HepG2 (cell line): ENCODE measurements at regions of chr2 and their contacts with region 1.

Region 1: DNA sequence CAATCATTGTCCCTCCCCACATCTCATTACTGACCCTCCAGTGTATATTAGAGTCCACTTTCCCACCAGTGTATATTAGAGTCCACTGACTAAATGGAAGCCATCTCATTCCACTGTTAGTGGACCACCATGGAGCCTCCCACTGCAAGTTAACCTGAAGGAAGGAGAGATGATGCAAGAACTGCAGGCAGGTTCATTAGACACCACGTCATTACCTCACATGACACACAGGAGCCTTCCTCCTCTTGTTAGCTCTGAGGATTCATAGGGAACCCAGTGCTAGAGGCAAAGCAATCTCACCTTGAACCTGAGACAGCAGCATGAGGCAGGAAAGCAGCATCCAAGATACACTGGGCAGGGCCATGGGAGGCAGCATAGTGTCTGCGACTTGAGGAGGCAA is 523 bp downstream of the REG3A start:
- DNase-seq: no peak
- ATAC-seq: no peak
- H3K4me3 ChIP-seq: no peak overlapping the region
- H3K27ac ChIP-seq: no peak overlapping the region
- H3K4me1 ChIP-seq: no peaks in the 10 kb centered on the region
- H3K27me3 ChIP-seq: no peaks in the 10 kb centered on the region
- CTCF ChIP-seq: no peak
- EP300 ChIP-seq: no peak
- POLR2A ChIP-seq: no peak
- RAD21 ChIP-seq: no peak

Region 2: GRCh38 chr2:78979380-78980151 is 179.5 kb before region 1 on chr2:
- CTCF ChIA-PET with region 1: no interaction called
- POLR2A ChIA-PET with region 1: no interaction called
- in situ Hi-C with region 1: no loop called
- intact Hi-C with region 1: no loop called
- DNase-seq: peak; percentile 53
- ATAC-seq: peak; percentile 95
- H3K4me3 ChIP-seq: no peak overlapping the region
- H3K27ac ChIP-seq: no peak overlapping the region
- H3K4me1 ChIP-seq: no peaks in the 10 kb centered on the region
- H3K27me3 ChIP-seq: no peaks in the 10 kb centered on the region
- CTCF ChIP-seq: peak; percentile 89
- EP300 ChIP-seq: no peak
- POLR2A ChIP-seq: no peak
- RAD21 ChIP-seq: peak; percentile 83

Region 3: DNA sequence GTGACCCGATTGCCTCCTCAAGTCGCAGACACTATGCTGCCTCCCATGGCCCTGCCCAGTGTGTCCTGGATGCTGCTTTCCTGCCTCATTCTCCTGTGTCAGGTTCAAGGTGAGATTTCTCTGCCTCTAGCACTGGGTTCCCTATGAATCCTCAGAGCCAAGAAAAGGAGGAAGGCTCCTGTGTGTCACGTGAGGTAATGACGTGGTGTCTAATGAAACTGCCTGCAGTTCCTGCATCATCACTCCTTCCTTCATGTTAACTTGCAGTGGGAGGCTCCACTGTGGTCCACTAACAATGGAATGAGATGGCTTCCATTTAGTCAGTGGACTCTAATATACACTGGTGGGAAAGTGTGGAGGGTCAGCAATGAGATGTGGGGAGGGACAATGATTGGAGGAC is 133.0 kb before region 1 on chr2:
- CTCF ChIA-PET with region 1: no interaction called
- POLR2A ChIA-PET with region 1: no interaction called
- in situ Hi-C with region 1: no loop called
- intact Hi-C with region 1: loop called (anchors 2 kb)
- DNase-seq: no peak
- ATAC-seq: no peak
- H3K4me3 ChIP-seq: no peak overlapping the region
- H3K27ac ChIP-seq: no peak overlapping the region
- H3K4me1 ChIP-seq: no peaks in the 10 kb centered on the region
- H3K27me3 ChIP-seq: no peaks in the 10 kb centered on the region
- CTCF ChIP-seq: no peak
- EP300 ChIP-seq: no peak
- POLR2A ChIP-seq: no peak
- RAD21 ChIP-seq: no peak

Region 4: GRCh38 chr2:79219383-79219988 is 60.5 kb after region 1 on chr2:
- CTCF ChIA-PET with region 1: no interaction called
- POLR2A ChIA-PET with region 1: no interaction called
- in situ Hi-C with region 1: no loop called
- intact Hi-C with region 1: no loop called
- DNase-seq: peak; percentile 55
- ATAC-seq: peak; percentile 79
- H3K4me3 ChIP-seq: no peak overlapping the region
- H3K27ac ChIP-seq: no peak overlapping the region
- H3K4me1 ChIP-seq: no peaks in the 10 kb centered on the region
- H3K27me3 ChIP-seq: no peaks in the 10 kb centered on the region
- CTCF ChIP-seq: peak; percentile 80
- EP300 ChIP-seq: no peak
- POLR2A ChIP-seq: no peak
- RAD21 ChIP-seq: peak; percentile 54; the same call in 1 of the 2 replicates